ENCODE measurements at regions of chr6 and their contacts with region 1.

Region 1: DNA sequence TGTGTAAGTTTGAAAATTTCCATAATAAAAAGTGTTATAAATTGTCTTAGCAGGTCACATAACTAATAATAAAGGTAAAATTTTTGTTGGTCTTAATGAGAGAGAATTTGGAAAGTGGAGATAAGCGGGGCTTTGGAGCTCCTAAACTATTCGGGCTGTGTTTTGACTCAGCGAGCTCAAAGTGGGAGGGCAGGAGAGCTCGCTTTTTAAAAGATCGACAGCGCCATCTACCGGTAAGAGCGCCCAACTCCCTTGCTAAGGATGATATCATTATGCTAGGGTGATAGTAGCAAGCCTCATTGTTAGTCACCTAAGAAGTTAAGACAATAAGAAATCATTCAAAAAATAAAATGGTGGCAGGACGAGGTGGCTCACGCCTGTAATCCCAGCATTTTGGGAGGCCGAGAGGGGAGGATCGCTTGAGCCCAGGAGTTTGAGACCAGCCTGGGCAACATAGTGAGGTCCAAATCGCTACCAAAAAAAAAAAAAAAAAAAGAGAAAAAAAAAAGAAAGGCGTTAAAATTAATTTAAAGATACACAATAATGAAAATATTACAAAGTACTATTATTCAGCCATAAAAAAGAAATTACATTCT is 24.8 kb downstream of the C6orf15 start:
- DNase-seq: no peak
- ATAC-seq: peak; percentile 97
- H3K4me3 ChIP-seq: no peak overlapping the region
- H3K27ac ChIP-seq: no peak overlapping the region
- H3K4me1 ChIP-seq: peaks cover 3% of the 10 kb centered on the region; the same call in 1 of the 2 replicates
- H3K27me3 ChIP-seq: no peaks in the 10 kb centered on the region
- CTCF ChIP-seq: peak; percentile 84

Region 2: GRCh38 chr6:30616811-30617564 is 470.6 kb before region 1 on chr6 and contains the start of gene PPP1R10:
- CTCF ChIA-PET with region 1: no interaction called
- POLR2A ChIA-PET with region 1: interaction called, 13 read pairs
- in situ Hi-C with region 1: no loop called
- intact Hi-C with region 1: no loop called
- DNase-seq: peak; percentile 100
- ATAC-seq: peak; percentile 90
- H3K4me3 ChIP-seq: peak within 1 kb of the TSS; percentile 71 to 98
- H3K27ac ChIP-seq: peak within 1 kb of the TSS; percentile 100
- H3K4me1 ChIP-seq: peaks cover 32% of the 10 kb centered on the region
- H3K27me3 ChIP-seq: no peaks in the 10 kb centered on the region
- CTCF ChIP-seq: no peak
- total RNA-seq, gene PPP1R10: 82.9 TPM

Region 3: GRCh38 chr6:30828027-30828960 is 259.3 kb before region 1 on chr6:
- CTCF ChIA-PET with region 1: interaction called, 11 read pairs
- POLR2A ChIA-PET with region 1: no interaction called
- in situ Hi-C with region 1: no loop called
- intact Hi-C with region 1: loop called (anchors 2 kb)
- DNase-seq: no peak
- ATAC-seq: peak; percentile 95
- H3K4me3 ChIP-seq: peak overlapping the region in 1 of 2 experiments; percentile 29; a peak in 2 of 4 replicates
- H3K27ac ChIP-seq: peak overlapping the region; percentile 85
- H3K4me1 ChIP-seq: peaks cover 28% of the 10 kb centered on the region
- H3K27me3 ChIP-seq: no peaks in the 10 kb centered on the region
- CTCF ChIP-seq: peak; percentile 95

Region 4: GRCh38 chr6:30914076-30914853 is 173.3 kb before region 1 on chr6 and contains the start of gene VARS2:
- CTCF ChIA-PET with region 1: interaction called, 18 read pairs
- POLR2A ChIA-PET with region 1: interaction called, 5 read pairs
- in situ Hi-C with region 1: no loop called
- intact Hi-C with region 1: no loop called
- DNase-seq: peak; percentile 64
- ATAC-seq: peak; percentile 97
- H3K4me3 ChIP-seq: peak within 1 kb of the TSS; percentile 66 to 89
- H3K27ac ChIP-seq: peak within 1 kb of the TSS; percentile 92
- H3K4me1 ChIP-seq: peaks cover 14% of the 10 kb centered on the region
- H3K27me3 ChIP-seq: no peaks in the 10 kb centered on the region
- CTCF ChIP-seq: peak; percentile 30; the same call in 1 of the 2 replicates
- total RNA-seq, gene VARS2: 42.7 TPM

Region 5: DNA sequence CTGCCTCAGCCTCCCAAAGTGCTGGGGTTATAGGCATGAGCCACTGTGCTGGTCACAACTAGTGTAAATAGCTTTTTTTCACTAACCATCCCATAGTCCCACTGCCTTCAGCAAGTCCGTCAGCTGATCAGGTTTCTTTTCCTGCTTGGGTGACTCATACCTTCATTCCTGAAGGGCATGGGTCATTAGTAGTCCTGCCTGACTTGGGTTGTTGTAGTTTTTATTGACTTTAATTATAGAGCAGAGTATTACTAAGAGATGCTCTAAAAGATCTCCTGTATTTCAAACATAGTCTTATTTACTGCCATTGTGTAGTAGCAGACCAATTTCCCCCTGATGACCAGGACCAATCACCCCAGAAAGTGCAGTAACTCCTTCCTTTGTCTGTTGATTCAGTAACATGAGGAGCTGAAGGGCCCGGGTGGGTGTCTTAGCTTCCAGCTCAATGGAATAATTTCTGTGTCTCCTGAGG is 158.5 kb after region 1 on chr6:
- CTCF ChIA-PET with region 1: no interaction called
- POLR2A ChIA-PET with region 1: no interaction called
- in situ Hi-C with region 1: no loop called
- intact Hi-C with region 1: no loop called
- DNase-seq: peak; percentile 67
- ATAC-seq: peak; percentile 96
- H3K4me3 ChIP-seq: no peak overlapping the region
- H3K27ac ChIP-seq: no peak overlapping the region
- H3K4me1 ChIP-seq: peaks cover 3% of the 10 kb centered on the region; the same call in 1 of the 2 replicates
- H3K27me3 ChIP-seq: peaks cover 8% of the 10 kb centered on the region
- CTCF ChIP-seq: no peak

Measured in Panc1 (cell line).